ENCODE measurements at regions of chr1 and their contacts with region 1.

Region 1: DNA sequence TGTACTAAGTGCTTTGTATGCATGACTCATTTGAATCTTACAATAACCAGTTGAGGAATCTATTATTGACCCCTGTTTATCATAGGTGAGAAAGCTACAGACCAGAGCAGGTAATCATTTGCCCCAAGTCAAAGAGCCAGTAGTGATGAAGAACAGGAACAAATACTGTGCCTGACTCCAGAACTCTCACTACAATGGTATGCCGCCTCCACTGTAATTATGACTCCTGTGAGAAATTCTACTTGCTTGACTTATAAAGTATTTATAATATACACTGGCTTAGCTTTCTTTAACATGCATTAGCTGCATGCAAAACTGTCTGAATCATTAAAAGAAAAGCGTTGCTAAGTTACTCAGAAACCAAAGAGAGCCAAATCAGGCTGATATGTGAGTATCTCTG is 92.6 kb downstream of the ZNF281 start:
- DNase-seq: peak; percentile 90
- ATAC-seq: peak; percentile 78
- H3K4me3 ChIP-seq: no peak overlapping the region
- H3K27ac ChIP-seq: no peak overlapping the region
- H3K4me1 ChIP-seq: peaks cover 15% of the 10 kb centered on the region
- H3K27me3 ChIP-seq: no peaks in the 10 kb centered on the region
- CTCF ChIP-seq: no peak
- POLR2A ChIP-seq: no peak
- RAD21 ChIP-seq: 0 out of 2 replicates have a peak, but pooled peaks have one; percentile 9

Region 2: GRCh38 chr1:198681831-198682759 is 1635.1 kb before region 1 on chr1:
- CTCF ChIA-PET with region 1: no interaction called
- POLR2A ChIA-PET with region 1: no interaction called
- dilution Hi-C with region 1: no loop called
- in situ Hi-C with region 1: no loop called
- intact Hi-C with region 1: no loop called
- DNase-seq: peak; percentile 93
- ATAC-seq: peak; percentile 89
- H3K4me3 ChIP-seq: peak overlapping the region; percentile 11; the same call in 1 of the 2 replicates
- H3K27ac ChIP-seq: peak overlapping the region; percentile 6; the same call in 1 of the 2 replicates
- H3K4me1 ChIP-seq: no peaks in the 10 kb centered on the region
- H3K27me3 ChIP-seq: no peaks in the 10 kb centered on the region
- CTCF ChIP-seq: no peak
- POLR2A ChIP-seq: 0 out of 2 replicates have a peak, but pooled peaks have one; percentile 18
- RAD21 ChIP-seq: peak; percentile 34

Region 3: DNA sequence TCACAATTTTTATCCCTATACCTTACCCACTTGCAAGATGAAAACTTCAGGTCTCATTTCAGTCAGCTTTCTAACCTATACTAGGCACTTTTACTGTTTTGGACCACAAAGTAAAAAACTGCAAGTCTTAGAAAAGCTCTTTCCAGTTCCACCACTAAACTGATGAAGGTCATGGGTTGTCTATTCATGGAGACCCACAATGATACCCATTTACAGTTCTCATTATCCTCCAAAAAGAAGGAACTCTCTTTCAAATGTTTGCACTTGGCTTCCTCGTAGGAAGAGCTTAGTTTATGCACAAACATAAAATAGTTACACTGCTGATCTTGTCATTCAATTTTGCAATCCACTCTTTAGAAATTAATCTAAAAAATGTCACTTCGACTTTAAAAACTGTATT is 83.3 kb after region 1 on chr1:
- CTCF ChIA-PET with region 1: no interaction called
- POLR2A ChIA-PET with region 1: no interaction called
- dilution Hi-C with region 1: no loop called
- in situ Hi-C with region 1: no loop called
- intact Hi-C with region 1: loop called (anchors 5 kb)
- DNase-seq: no peak
- ATAC-seq: no peak
- H3K4me3 ChIP-seq: no peak overlapping the region
- H3K27ac ChIP-seq: no peak overlapping the region
- H3K4me1 ChIP-seq: no peaks in the 10 kb centered on the region
- H3K27me3 ChIP-seq: no peaks in the 10 kb centered on the region
- CTCF ChIP-seq: no peak
- POLR2A ChIP-seq: no peak
- RAD21 ChIP-seq: no peak